ENCODE measurements at regions of chr10 and their contacts with region 1.

Region 1: DNA sequence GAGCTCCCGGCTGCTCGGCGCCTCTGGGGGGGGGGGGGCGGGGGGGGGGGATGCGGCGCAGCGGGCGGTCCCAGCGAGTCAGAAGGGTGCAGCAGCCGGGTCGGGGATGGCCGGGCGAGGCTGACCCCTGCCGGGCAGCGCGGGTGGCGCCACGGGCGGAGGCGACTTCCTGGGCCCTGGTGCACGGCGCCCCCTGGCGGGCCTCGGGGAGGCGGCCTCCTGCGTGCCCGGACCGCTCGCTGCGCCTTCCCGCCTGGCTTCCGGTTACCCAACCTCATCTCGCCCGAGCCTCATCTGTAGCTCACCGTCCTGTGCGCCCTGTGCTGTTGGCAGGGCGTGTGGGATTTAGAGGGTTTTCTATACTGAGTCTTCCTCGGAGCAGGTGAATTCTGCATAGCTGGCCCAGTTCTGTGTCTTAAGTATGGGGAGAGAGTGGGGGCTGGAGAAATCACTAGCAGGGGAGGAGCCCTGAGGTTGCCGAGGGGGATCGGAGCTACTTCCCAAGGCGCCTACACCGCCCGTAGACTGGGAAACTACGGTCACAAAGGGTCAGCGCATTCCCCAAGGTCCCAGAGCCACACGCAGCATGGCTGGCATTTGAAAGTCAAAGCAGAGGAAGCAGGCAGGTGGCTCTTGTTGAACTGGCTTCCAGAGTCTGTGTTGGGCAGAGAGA is 28.3 kb upstream of the WDFY4 start:
- DNase-seq: peak; percentile 91
- ATAC-seq: peak; percentile 98
- H3K4me3 Mint-ChIP-seq: peak overlapping the region; percentile 70
- H3K27ac Mint-ChIP-seq: peak overlapping the region; percentile 42
- H3K4me1 Mint-ChIP-seq: peaks cover 14% of the 10 kb centered on the region
- H3K27me3 Mint-ChIP-seq: peaks cover 39% of the 10 kb centered on the region

Region 2: GRCh38 chr10:48309711-48310226 is 346.6 kb before region 1 on chr10:
- CTCF ChIA-PET with region 1: interaction called, 10 read pairs
- POLR2A ChIA-PET with region 1: no interaction called
- DNase-seq: no peak
- ATAC-seq: no peak
- H3K4me3 Mint-ChIP-seq: no peak overlapping the region
- H3K27ac Mint-ChIP-seq: no peak overlapping the region
- H3K4me1 Mint-ChIP-seq: peaks cover 43% of the 10 kb centered on the region
- H3K27me3 Mint-ChIP-seq: no peaks in the 10 kb centered on the region

Region 3: DNA sequence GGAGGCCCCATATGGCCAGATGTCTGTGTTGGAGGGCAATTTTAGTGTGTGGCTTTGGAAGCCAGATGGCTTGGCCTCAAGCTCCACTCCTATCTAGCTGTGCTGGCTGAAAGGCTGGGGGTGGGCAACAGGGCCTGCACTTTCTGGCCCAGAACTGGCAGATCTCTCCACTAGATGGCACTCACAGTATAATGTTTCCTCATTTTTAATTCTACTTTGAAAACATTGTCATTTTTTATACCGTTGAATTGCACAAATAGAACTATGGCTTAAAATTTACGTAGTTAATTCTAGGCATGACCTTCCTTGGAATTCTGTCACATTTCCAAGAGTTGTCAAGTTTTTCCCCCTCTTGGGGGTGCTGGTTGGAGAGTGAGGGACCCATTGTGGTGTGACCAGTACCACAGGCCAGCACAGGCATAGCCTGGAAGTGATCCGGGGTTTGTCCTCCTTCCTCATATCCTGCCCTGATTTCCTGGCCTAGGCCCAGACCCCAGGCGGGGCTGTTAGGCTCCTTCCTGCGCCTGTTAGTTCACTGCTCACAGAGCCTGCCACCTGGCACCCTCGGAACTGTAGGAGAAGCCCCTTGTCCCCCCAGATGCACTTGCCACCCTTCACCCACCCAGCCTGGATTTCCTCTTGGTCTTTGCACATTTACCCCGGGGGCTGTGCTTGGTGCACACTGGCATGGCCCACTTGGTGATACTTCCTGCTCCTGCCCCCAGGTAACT is 104.4 kb before region 1 on chr10:
- CTCF ChIA-PET with region 1: interaction called, 84 read pairs
- POLR2A ChIA-PET with region 1: no interaction called
- DNase-seq: peak; percentile 35
- ATAC-seq: no peak
- H3K4me3 Mint-ChIP-seq: no peak overlapping the region
- H3K27ac Mint-ChIP-seq: no peak overlapping the region
- H3K4me1 Mint-ChIP-seq: no peaks in the 10 kb centered on the region
- H3K27me3 Mint-ChIP-seq: no peaks in the 10 kb centered on the region

Region 4: DNA sequence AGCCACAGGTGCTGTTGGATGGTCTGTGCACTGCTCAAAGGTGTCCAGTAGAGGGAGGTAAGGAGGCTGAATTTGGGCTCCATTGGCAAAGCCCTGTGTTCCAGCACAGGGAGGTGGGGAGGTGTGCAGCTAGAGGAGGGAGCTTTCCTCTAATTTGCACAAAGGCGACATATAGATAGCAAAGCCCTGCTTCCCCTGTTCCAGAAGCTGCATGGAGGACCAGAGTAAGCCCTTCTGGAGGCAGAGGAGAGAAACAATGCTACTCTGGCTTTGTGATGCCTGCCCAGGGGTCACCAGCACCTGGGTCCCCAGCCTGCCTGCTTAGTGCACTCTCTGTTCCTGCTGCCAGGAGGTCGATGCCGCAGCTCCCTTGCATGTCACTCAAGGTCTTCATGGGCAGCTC is 48.1 kb before region 1 on chr10:
- CTCF ChIA-PET with region 1: interaction called, 68 read pairs
- POLR2A ChIA-PET with region 1: no interaction called
- DNase-seq: peak; percentile 51
- ATAC-seq: peak; percentile 74
- H3K4me3 Mint-ChIP-seq: no peak overlapping the region
- H3K27ac Mint-ChIP-seq: no peak overlapping the region
- H3K4me1 Mint-ChIP-seq: peaks cover 3% of the 10 kb centered on the region
- H3K27me3 Mint-ChIP-seq: peaks cover 37% of the 10 kb centered on the region

Region 5: GRCh38 chr10:48670978-48671913 is 14.9 kb after region 1 on chr10:
- CTCF ChIA-PET with region 1: interaction called, 15 read pairs
- POLR2A ChIA-PET with region 1: no interaction called
- DNase-seq: no peak
- ATAC-seq: no peak
- H3K4me3 Mint-ChIP-seq: no peak overlapping the region
- H3K27ac Mint-ChIP-seq: no peak overlapping the region
- H3K4me1 Mint-ChIP-seq: no peaks in the 10 kb centered on the region
- H3K27me3 Mint-ChIP-seq: no peaks in the 10 kb centered on the region

Region 6: GRCh38 chr10:49407552-49408137 is 751.3 kb after region 1 on chr10:
- CTCF ChIA-PET with region 1: interaction called, 12 read pairs
- POLR2A ChIA-PET with region 1: no interaction called
- DNase-seq: peak; percentile 83
- ATAC-seq: peak; percentile 87
- H3K4me3 Mint-ChIP-seq: no peak overlapping the region
- H3K27ac Mint-ChIP-seq: no peak overlapping the region
- H3K4me1 Mint-ChIP-seq: no peaks in the 10 kb centered on the region
- H3K27me3 Mint-ChIP-seq: peaks cover 41% of the 10 kb centered on the region